ENCODE measurements at regions of chr20 and their contacts with region 1.

Region 1: GRCh38 chr20:33450867-33451266 is 7.3 kb upstream of the SNTA1 start:
- DNase-seq: no peak
- H3K4me3 ChIP-seq: no peak overlapping the region
- H3K27ac ChIP-seq: no peak overlapping the region
- H3K4me1 ChIP-seq: no peaks in the 10 kb centered on the region
- H3K27me3 ChIP-seq: no peaks in the 10 kb centered on the region
- CTCF ChIP-seq: no peak

Region 2: GRCh38 chr20:33076662-33077372 is 374.1 kb before region 1 on chr20:
- intact Hi-C with region 1: no loop called
- DNase-seq: peak in 1 of 5 donors; percentile 41
- H3K4me3 ChIP-seq: no peak overlapping the region
- H3K27ac ChIP-seq: no peak overlapping the region
- H3K4me1 ChIP-seq: no peaks in the 10 kb centered on the region
- H3K27me3 ChIP-seq: no peaks in the 10 kb centered on the region
- CTCF ChIP-seq: no peak

Region 3: DNA sequence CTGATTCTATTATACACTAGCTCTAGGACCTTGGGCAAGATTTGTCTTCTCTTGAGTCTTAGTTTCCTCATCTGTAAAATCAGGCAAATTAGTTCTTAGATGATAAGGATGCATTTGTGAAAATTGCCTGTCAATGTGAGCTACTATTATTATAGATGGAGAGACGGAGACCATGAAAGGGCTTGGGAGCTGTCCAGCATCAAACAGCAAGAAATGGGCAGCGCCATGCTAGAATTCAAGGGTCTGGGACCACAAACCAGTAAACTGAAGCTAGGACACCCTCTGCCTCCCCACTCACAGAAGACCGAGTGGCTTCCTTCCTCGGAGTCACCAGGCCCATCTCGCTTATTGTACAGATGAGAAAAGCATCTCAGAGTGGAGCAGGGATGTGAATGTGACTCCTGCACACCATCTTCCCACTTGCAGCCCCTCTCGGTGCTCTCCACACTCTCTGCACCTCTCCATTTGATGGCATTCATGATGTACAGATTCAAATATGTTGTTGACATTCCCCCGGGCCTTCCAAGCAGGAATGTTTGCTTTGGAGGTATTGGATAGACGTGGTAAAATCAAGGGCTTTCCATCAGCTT is 257.9 kb before region 1 on chr20:
- intact Hi-C with region 1: no loop called
- DNase-seq: peak in 2 of 5 donors; percentile 24 to 33
- H3K4me3 ChIP-seq: no peak overlapping the region
- H3K27ac ChIP-seq: no peak overlapping the region
- H3K4me1 ChIP-seq: no peaks in the 10 kb centered on the region
- H3K27me3 ChIP-seq: no peaks in the 10 kb centered on the region
- CTCF ChIP-seq: no peak

Region 4: DNA sequence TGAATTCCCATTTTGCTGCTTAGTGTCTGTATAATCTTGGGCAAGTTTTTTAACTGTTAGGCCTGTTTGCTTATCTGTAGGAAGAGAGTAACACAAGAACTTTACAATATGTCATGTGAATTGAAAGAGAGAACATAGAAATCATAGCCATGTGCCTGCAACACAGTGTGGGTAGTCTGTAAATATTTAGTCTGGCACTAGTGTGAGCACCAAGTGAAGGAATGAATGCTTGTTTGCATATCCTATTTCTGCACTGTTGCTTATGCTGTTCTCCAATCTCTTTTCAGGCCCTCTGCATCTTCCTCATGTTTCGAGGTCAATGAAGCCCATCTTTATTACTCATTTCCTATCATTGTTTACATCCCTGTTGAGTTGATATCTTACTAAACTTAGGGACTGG is 88.3 kb after region 1 on chr20:
- intact Hi-C with region 1: no loop called
- DNase-seq: no peak
- H3K4me3 ChIP-seq: no peak overlapping the region
- H3K27ac ChIP-seq: no peak overlapping the region
- H3K4me1 ChIP-seq: peaks cover 0 to 5% (median 4%) of the 10 kb centered on the region in 3 donors
- H3K27me3 ChIP-seq: no peaks in the 10 kb centered on the region
- CTCF ChIP-seq: no peak

Region 5: DNA sequence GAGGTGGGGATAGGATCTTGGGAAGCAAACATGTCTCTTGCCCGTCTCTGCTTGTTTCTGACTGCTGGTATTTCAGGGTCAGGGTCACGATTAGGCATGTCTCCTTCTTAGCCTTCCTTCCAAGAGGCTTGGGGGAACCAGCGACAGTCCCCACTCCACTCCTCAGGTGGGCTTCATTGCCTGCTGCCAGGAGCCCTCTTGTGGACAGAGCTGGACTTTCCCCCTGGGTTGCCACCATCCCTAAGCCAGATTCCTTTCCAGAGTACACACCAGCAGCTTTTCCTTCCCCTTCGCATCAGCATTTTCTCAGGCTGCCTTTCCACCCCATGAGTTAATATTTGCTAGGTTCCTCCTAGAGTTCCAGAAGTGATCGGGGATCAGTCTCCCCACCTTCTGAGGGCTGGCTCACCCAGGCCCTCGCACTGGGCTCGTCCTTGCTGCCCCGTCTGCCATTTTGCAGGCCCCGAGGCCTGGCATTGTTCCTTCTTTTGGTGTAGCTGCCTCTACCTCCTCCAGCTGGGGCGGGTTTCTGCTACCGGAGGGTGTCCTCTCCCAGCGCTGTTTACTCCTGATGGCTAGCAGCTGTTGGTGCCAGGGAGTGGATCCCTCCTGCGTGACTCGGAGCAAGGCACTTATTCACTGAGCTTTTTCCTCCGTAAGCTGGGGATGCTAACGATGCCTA is 202.5 kb after region 1 on chr20:
- intact Hi-C with region 1: loop called (anchors 10 kb)
- DNase-seq: peak; percentile 70 to 93 (median 89)
- H3K4me3 ChIP-seq: peak overlapping the region in 2 of 3 donors; percentile 39 to 48
- H3K27ac ChIP-seq: peak overlapping the region; percentile 57 to 62
- H3K4me1 ChIP-seq: peaks cover 5 to 25% (median 16%) of the 10 kb centered on the region in 3 donors
- H3K27me3 ChIP-seq: no peaks in the 10 kb centered on the region
- CTCF ChIP-seq: peak; percentile 72

Region 6: DNA sequence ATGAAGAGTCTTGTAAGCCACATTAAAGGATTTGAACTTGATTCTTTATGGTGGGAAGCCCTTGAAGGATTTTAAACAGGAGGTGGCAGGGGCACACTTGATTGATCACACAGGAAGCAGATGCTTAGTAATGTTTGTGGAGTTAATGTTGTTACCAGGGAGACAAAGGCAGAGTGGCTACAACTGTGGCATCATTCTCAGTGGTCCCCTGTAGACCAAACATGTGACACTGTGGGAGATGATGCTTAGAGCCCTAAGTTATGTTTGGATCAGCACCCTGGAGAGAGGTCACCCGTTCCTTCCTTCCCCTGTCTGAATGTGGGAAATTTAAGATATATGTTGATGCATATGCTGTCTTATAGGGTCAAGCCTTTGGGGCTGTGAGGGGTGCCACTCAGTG is 608.0 kb after region 1 on chr20:
- intact Hi-C with region 1: no loop called
- DNase-seq: peak in 2 of 5 donors; percentile 45 to 48
- H3K4me3 ChIP-seq: no peak overlapping the region
- H3K27ac ChIP-seq: no peak overlapping the region
- H3K4me1 ChIP-seq: peaks cover 0 to 3% (median 0%) of the 10 kb centered on the region in 3 donors
- H3K27me3 ChIP-seq: no peaks in the 10 kb centered on the region
- CTCF ChIP-seq: no peak